Activated CD4-positive, alpha-beta memory T cell treated with anti-CD3 and anti-CD28 coated beads for 36 hours (primary cell): ENCODE measurements at regions of chr9 and their contacts with region 1.

Region 1: DNA sequence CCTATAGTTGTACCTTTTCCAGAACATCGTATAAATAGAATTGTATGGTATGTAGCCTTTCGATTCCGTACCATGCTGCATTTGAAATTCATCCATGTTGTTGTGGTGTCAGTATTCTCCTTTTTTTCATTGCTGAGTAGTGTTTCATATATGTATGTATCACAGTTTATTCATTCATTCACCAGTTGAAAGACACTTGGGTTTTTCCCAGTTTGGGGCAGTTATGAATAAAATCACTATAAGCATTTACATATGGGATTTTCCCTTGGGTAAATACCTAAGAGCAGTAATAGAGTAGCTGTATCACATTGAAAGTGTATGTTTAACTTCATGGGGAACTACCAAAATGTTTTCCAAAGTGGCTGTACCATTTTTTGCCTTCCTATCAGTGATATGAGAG is 16.1 kb upstream of the FKTN start:
- DNase-seq: no peak
- H3K4me3 Mint-ChIP-seq: no peak overlapping the region
- H3K27ac Mint-ChIP-seq: peak overlapping the region; percentile 24
- H3K4me1 Mint-ChIP-seq: peaks cover 9% of the 10 kb centered on the region
- H3K27me3 Mint-ChIP-seq: no peaks in the 10 kb centered on the region

Region 2: DNA sequence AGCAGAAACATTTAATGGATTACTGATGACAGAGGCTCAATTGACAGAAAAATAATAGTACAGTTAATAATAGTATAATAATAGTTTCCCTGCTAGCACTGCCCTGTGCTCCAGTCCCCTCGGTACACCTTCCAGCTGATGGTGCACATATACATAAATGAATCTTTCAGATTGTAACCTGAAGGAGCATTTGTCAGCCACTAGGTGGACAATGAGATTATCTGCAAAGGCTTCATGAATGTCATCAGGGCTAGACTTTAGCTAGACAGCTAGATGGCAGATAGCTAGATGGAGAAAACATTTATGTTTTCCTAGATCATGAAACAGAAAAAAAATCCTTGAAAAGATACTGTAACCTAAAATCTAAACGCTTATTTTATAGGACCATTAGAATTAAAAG is 1752.2 kb before region 1 on chr9:
- CTCF ChIA-PET with region 1: no interaction called
- POLR2A ChIA-PET with region 1: no interaction called
- intact Hi-C with region 1: loop called (anchors 10 kb)
- DNase-seq: no peak
- H3K4me3 Mint-ChIP-seq: no peak overlapping the region
- H3K27ac Mint-ChIP-seq: no peak overlapping the region
- H3K4me1 Mint-ChIP-seq: peaks cover 4% of the 10 kb centered on the region
- H3K27me3 Mint-ChIP-seq: no peaks in the 10 kb centered on the region

Region 3: DNA sequence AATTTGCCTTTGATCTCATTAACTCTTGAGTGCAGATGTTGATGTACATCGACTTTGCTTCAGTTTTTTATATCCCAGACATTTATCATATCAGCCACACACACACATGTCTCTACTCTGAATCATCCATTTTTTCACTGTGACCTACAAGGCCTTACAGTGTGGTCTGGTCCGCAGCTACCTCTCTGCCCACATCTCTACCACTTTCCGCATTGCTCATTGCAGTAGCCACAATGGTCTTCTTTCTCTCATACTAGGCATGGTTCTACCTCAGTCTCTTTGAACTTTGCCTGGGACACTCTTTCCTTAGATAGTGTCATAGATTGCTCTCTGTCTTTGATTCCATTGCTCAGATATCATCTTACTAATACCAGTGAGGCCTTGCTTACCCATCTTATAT is 181.9 kb before region 1 on chr9:
- CTCF ChIA-PET with region 1: no interaction called
- POLR2A ChIA-PET with region 1: no interaction called
- intact Hi-C with region 1: loop called (anchors 1 kb)
- DNase-seq: peak; percentile 84
- H3K4me3 Mint-ChIP-seq: no peak overlapping the region
- H3K27ac Mint-ChIP-seq: no peak overlapping the region
- H3K4me1 Mint-ChIP-seq: peaks cover 13% of the 10 kb centered on the region
- H3K27me3 Mint-ChIP-seq: no peaks in the 10 kb centered on the region

Region 4: DNA sequence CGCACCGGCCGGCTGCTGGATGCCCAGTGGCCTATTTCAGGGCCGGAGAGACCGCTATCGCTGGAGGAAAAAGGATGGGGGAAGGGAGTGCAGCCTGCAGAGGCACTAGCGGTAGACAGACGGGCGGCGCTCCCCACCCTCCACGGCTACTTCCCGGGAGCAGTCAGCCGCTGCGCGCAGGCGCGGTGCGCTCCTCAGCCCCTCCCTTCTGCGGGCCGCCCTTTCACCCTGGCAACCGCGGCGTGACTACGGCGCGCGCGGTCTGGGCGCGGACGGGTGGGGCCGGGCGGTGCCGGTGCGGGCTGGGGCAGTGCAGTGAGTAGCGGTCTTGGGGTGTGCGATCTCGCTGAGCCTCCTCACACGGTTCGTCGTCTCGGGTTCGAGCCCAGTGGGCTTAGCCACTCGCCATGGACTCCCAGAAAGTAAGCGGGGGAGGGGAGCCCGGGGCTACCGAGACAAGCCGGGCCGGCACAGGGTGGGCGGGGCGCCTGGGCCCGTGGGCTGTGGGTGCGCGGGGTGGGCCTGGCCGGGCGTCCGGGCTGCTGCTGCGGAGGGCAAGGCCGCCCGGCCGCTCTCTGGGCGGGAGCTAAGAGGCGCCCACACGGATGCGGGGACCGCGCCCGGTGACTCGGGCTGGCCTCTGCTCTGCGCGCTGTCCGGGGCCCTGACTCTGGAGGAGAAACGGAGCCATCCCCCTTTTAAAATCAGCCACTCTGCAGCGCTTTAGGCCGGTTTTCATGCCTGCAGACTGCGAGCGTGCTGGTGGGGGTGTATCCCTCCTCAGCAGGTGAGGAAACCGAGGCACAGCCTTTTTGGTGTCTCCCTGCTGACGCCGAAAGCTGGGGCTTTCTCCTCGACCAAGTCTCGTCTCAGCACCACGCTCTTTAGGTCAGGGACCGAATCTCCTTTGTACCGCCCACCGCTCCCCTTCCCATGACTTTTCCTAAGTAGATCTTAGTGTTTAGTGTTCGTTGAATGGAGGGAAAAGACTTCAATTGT is 93.7 kb before region 1 on chr9 and contains the start of gene FSD1L:
- CTCF ChIA-PET with region 1: no interaction called
- POLR2A ChIA-PET with region 1: no interaction called
- intact Hi-C with region 1: loop called (anchors 5 kb)
- DNase-seq: peak; percentile 90
- H3K4me3 Mint-ChIP-seq: peak within 1 kb of the TSS; percentile 63
- H3K27ac Mint-ChIP-seq: peak within 1 kb of the TSS; percentile 49
- H3K4me1 Mint-ChIP-seq: peaks cover 13% of the 10 kb centered on the region
- H3K27me3 Mint-ChIP-seq: no peaks in the 10 kb centered on the region
- total RNA-seq, gene FSD1L: 3.2 to 3.6 TPM

Region 5: DNA sequence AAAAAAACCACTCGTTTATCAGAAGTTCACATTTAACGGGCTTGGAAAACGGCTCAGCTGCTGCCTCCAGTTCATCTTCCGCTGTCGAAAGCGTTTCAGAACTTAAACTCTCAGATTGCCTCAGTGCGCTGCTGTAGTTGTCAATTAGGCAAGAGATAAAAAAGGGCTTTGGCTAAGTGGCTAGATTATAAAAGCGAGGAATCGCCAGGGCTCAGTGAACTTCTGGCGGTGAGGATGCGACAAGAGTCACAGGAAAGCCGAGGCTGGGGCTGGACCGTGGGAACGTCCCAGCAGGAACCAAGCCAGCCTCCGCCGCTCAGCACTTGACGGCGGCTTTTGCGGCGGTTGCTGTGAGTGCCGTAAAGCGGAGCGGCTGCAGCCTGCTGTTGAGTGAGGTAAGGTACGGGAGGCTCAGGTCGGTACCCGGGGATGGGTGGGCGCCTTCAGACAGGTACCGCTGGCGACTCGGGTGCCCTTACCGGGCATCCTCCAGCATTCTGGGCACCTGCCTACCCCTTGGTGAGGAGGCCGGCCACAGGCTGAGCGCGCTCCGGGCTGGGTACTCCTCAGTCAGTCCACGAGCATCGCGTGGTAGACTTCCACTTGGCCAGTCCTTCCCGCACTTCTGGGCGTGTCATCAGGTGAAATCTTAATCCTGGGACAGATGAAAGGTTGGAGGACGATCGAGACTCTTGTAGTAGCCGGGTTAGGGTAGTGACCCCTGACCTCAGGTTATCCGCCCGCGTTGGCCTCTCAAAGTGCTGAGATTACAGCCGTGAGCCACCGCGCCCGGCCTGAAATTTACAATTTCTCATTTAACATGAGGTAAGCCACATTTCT is 16.2 kb after region 1 on chr9 and contains the start of gene FKTN:
- CTCF ChIA-PET with region 1: interaction called, 3 read pairs
- POLR2A ChIA-PET with region 1: interaction called, 3 read pairs
- intact Hi-C with region 1: loop called (anchors 1 kb)
- DNase-seq: peak; percentile 90
- H3K4me3 Mint-ChIP-seq: peak within 1 kb of the TSS; percentile 94
- H3K27ac Mint-ChIP-seq: peak within 1 kb of the TSS; percentile 52
- H3K4me1 Mint-ChIP-seq: peaks cover 21% of the 10 kb centered on the region
- H3K27me3 Mint-ChIP-seq: no peaks in the 10 kb centered on the region
- total RNA-seq, gene FKTN: 15.8 to 16.8 TPM

Region 6: DNA sequence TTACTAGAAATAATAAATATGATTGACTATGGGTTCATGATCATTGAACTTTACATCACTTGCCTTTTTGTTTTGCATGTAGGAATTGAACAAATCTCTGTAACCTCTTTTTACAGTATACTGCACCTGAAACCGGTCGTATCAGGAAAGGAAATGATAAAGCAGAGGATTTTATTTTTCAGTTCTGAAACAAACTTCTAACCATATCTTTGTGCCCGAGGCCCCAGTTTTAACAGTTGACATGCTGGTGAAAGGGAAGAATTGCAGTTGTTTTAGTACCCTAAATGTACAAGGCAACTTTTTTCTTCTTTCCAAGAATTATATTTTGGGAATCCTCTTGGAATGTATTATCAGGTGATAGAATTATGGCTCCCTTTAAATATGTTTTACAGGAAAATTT is 180.3 kb after region 1 on chr9:
- CTCF ChIA-PET with region 1: no interaction called
- POLR2A ChIA-PET with region 1: no interaction called
- intact Hi-C with region 1: no loop called
- DNase-seq: no peak
- H3K4me3 Mint-ChIP-seq: no peak overlapping the region
- H3K27ac Mint-ChIP-seq: no peak overlapping the region
- H3K4me1 Mint-ChIP-seq: no peaks in the 10 kb centered on the region
- H3K27me3 Mint-ChIP-seq: no peaks in the 10 kb centered on the region